ENCODE measurements at regions of chr15 and their contacts with region 1.

Region 1: DNA sequence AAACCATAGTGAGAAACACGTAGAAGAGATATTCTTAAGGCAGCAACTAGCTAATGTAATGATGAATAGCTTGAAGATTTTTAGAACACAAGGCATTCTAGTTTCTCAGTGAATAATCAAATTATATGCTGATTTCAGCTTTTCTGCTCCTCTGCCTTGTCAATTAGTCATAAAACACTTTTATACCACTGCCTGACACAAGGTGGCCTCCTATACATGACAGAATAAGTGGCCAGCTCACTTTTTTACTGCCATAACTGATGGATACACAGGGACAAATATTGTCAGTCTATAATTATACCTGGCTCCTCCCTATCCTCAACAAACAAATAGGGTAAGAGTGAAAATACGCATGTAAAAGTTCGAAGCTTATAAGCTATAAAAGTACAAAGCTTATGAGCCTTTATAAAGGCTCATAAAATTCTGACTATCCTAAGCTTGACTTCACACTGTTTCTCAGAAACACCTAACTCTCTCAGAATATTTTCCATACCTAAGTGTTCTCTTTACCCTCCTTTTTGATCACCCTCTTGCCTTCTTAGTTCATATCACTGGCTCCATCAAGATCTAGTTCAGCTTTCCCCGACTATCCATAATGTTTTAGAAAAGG is 81.6 kb downstream of the HERC1 start:
- H3K4me3 Mint-ChIP-seq: no peak overlapping the region
- H3K27ac Mint-ChIP-seq: no peak overlapping the region
- H3K4me1 Mint-ChIP-seq: no peaks in the 10 kb centered on the region
- H3K27me3 Mint-ChIP-seq: no peaks in the 10 kb centered on the region

Region 2: GRCh38 chr15:63791228-63791627 is 39.0 kb after region 1 on chr15:
- intact Hi-C with region 1: no loop called
- H3K4me3 Mint-ChIP-seq: no peak overlapping the region
- H3K27ac Mint-ChIP-seq: no peak overlapping the region
- H3K4me1 Mint-ChIP-seq: peaks cover 12% of the 10 kb centered on the region
- H3K27me3 Mint-ChIP-seq: no peaks in the 10 kb centered on the region

Region 3: DNA sequence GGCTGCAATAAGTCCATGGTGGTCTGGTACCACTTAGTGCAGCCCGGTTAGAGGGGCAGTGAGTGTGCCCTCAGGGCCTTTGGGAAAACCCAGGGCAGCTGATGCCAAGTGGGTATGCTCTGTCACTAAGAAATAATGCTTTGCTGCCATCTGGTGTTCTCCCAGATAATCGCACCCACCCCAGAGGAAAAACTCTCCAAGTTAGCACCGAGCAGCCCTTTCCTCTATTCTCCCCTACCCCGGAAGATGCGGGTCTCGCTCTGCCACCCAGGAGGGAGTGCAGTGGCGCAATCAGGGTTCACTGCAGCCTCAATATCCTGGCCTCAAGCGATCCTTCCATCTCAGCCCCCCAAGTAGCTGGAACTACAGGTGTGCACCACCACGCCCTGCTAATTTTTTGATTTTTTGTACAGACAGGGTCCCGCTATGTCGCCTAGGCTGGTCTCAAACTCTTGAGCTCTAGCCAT is 315.4 kb after region 1 on chr15:
- intact Hi-C with region 1: loop called (anchors 1 kb)
- H3K4me3 Mint-ChIP-seq: no peak overlapping the region
- H3K27ac Mint-ChIP-seq: no peak overlapping the region
- H3K4me1 Mint-ChIP-seq: peaks cover 39% of the 10 kb centered on the region
- H3K27me3 Mint-ChIP-seq: no peaks in the 10 kb centered on the region

Region 4: DNA sequence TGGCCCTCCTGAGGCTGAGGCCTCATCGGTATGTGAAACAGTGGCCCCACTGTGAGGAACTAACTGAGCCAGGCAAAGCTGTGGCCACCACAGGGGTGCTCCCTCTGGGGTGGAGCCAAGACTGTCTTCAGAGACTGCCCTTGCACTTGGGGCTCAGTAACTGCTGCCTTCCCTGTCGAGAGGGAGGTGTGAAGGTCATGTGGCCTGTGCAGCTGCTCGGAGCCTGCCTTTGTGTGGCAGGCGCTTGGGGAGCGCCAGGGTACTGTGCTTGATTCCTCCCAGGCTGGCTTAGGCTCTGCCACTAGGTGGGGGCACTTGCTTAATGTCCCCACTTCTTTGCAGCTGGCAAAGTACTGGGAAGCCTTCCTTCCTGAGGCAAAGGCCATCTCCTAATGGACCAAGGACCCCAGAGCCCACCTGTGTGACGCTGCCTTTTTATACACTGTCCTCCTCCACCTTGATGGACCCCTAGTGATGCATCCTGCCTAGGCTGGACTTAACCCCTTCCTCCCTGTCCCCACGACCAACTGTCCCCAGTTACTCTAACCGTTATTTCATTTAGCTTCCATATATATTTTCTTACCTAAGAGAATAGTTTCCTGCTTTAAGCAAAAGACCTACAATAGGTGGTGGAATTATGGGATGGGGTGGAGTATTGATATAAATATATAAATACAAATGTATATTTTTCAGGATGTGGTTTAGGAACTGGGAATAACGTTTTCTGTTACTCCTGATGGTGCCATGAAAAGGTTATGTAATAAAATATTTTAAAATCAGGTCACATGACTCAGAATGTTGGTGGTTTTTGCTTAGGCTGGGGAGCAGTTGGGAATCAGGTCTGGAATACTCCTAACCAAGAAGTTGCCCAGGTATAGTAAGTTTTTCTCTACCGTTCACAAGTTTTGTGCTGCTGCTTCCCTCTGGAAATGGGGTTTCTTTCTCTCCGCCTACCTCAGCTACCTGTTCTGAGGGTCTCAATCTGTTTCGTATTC is 385.3 kb after region 1 on chr15:
- intact Hi-C with region 1: loop called (anchors 10 kb)
- H3K4me3 Mint-ChIP-seq: no peak overlapping the region
- H3K27ac Mint-ChIP-seq: no peak overlapping the region
- H3K4me1 Mint-ChIP-seq: peaks cover 31% of the 10 kb centered on the region
- H3K27me3 Mint-ChIP-seq: no peaks in the 10 kb centered on the region

Region 5: DNA sequence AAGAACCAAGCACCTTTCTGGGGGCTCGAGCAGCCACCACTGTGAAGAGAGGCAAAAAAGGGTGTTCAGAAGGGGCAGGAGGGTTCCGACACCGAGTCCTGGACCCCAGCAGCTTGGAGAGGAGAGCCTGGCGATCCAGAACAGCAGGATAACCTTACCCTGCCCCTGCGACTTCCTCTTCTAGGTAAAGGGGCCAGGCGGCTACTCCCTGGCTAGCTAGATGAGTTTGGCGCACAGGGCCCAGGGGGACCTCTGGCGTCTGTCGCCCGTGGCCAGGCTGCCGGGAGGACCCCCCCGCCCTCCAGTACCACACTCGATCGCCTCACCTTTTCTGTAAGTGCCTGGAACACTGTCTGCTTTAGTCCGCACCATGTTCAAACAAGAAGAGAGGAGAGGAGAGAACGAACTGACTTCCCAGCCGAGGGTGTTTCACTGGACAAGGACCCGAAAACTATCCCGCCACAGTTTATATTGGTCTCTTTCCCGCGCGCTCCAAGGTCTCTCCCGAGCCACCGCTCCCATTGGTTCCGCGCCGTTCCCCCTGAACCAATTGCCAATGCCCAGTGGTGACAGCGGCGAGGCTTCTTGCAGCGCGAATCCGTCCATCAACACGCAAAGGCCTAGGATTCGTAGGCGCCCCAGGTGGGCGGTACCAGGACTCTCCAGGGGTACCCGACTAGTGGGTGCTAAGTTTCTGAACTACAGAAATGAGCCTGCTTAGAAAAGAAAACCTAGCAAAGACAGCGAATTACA is 629.0 kb after region 1 on chr15 and contains the start of gene PCLAF:
- intact Hi-C with region 1: no loop called
- H3K4me3 Mint-ChIP-seq: peak within 1 kb of the TSS; percentile 86
- H3K27ac Mint-ChIP-seq: peak within 1 kb of the TSS; percentile 65
- H3K4me1 Mint-ChIP-seq: peaks cover 15% of the 10 kb centered on the region
- H3K27me3 Mint-ChIP-seq: no peaks in the 10 kb centered on the region

Measured in dendritic cell treated with granulocyte-macrophage colony-stimulating factor and Interleukin-4, amounts not matched to agents 40 ng/mL and 50 ng/mL, for 4 days (primary cell).